CD4-positive, alpha-beta T cell (primary cell): ENCODE measurements at regions of chr5 and their contacts with region 1.

Region 1: DNA sequence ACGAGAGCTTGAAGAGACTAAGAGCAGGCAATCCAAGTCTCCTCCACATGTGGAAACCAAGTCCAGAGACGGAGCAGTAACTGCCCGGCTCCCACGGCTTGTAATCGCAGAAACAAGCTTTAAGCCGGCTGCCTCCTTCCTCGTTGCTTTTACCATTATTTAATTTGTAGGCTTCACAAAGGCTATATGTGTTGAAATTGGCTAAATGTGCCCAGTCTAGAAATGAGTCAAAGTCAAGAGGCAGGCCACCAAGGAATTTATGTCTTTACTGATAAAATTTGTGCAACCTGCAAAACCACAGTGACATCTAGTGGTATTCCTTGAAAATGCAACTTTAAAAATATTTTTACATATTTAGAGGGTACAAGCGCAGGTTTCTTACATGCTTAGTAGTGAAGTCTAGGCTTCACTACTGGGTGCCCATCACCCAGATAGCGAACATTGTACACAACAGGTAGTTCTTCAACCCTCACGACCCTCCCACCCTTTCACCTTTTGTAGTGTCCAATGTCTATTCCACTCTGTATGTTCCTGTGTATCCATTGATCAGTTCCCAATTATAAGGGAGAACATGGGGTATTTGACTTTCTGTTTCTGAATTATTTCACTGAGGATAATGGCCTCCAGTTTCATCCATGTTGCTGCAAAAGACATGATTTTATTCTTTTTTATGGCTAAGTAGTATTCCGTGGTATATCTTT is 33.5 kb upstream of the EBF1 start:
- DNase-seq: peak in 3 of 14 experiments; percentile 45 to 65 (median 64)
- ATAC-seq: peak; percentile 37
- H3K4me3 ChIP-seq: no peak overlapping the region
- H3K4me3 Mint-ChIP-seq: no peak overlapping the region
- H3K27ac ChIP-seq: no peak overlapping the region
- H3K27ac Mint-ChIP-seq: no peak overlapping the region
- H3K4me1 ChIP-seq: no peaks in the 10 kb centered on the region
- H3K4me1 Mint-ChIP-seq: no peaks in the 10 kb centered on the region
- H3K27me3 ChIP-seq: no peaks in the 10 kb centered on the region
- H3K27me3 Mint-ChIP-seq: peaks cover 10% of the 10 kb centered on the region
- CTCF ChIP-seq: peak; percentile 97

Region 2: DNA sequence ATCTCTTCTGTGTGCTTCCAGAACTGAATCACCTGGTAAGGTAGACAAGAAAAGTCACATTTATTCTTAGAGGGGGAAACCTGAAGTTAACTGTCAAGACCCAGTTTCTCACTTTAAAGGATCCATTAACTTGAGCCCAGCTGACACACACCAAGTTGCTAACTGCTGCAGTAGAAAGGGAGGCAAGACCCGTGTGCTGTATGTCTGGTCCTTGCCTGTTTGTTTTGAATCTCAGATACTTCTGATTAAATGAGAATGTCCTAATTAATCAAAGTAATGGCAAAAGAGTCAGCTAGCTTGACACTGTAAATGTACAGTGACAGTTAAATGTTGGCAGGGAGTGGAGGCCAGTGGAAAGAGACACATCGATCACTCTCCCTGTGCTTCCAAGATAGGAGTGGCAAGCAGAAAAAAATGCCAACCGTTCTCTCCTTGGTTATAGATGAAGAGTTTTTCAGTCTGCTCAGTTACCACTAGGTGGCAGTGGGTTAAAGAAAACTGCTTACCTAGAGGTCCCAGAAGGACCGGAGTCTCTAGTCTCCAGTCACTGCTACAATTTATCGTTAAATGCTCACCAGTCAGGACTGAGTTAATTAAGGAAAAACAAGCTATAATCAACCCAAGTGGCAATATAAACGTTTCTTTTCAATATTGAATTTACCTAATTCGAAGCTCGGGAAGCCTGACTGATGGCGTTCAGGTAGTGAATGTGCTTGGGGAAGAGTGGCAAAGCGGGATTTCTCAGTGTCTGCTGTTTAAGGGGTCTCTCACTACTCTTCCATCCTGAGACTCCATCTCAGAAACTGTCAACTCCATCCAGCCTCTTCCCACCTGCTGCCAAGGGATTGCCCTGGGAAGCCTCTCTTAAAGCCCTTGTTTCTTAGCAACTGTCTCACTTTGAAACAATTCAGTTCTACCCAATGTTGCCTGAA is 1371.2 kb before region 1 on chr5:
- CTCF ChIA-PET with region 1: no interaction called
- POLR2A ChIA-PET with region 1: no interaction called
- intact Hi-C with region 1: loop called (anchors 1 to 5 kb)
- DNase-seq: peak in 4 of 14 experiments; percentile 30 to 66 (median 59)
- ATAC-seq: peak; percentile 82
- H3K4me3 ChIP-seq: no peak overlapping the region
- H3K4me3 Mint-ChIP-seq: no peak overlapping the region
- H3K27ac ChIP-seq: no peak overlapping the region
- H3K27ac Mint-ChIP-seq: no peak overlapping the region
- H3K4me1 ChIP-seq: no peaks in the 10 kb centered on the region
- H3K4me1 Mint-ChIP-seq: peaks cover 6% of the 10 kb centered on the region
- H3K27me3 ChIP-seq: no peaks in the 10 kb centered on the region
- H3K27me3 Mint-ChIP-seq: no peaks in the 10 kb centered on the region
- CTCF ChIP-seq: peak; percentile 88

Region 3: DNA sequence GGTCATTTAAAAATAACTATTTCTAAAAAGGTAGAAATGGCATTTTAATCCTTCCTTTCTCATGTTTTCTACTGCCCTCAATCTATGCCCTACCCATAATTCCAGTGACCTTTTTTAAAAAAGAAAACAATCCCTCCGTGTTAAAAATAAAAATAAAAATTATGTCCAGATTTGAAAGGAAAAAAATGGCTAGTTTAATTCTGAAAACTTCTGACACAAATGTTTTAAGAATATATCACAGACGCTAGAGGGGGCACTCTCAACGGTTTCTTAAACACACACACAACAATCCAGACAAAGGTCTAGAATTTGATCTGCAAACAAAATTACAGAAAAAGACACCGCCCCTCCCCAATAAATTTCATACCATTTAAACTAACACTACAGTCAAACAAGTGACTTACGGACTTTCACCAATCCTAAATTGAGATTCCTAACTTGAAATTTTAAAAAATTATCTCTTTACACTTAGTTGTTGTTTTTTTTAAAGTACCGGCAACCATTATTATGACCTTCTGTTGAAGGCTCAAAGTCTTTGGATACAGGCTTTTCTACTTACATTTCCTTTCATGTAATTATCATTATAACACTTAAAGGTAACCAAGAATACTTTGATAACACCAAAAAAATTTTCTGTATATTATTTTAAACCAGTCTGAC is 1312.5 kb before region 1 on chr5:
- CTCF ChIA-PET with region 1: no interaction called
- POLR2A ChIA-PET with region 1: no interaction called
- intact Hi-C with region 1: loop called (anchors 1 to 5 kb)
- DNase-seq: peak in 4 of 14 experiments; percentile 36 to 62 (median 53)
- ATAC-seq: no peak
- H3K4me3 ChIP-seq: no peak overlapping the region
- H3K4me3 Mint-ChIP-seq: no peak overlapping the region
- H3K27ac ChIP-seq: no peak overlapping the region
- H3K27ac Mint-ChIP-seq: peak overlapping the region; percentile 11
- H3K4me1 ChIP-seq: no peaks in the 10 kb centered on the region
- H3K4me1 Mint-ChIP-seq: peaks cover 58% of the 10 kb centered on the region
- H3K27me3 ChIP-seq: no peaks in the 10 kb centered on the region
- H3K27me3 Mint-ChIP-seq: no peaks in the 10 kb centered on the region
- CTCF ChIP-seq: peak; percentile 61

Region 4: DNA sequence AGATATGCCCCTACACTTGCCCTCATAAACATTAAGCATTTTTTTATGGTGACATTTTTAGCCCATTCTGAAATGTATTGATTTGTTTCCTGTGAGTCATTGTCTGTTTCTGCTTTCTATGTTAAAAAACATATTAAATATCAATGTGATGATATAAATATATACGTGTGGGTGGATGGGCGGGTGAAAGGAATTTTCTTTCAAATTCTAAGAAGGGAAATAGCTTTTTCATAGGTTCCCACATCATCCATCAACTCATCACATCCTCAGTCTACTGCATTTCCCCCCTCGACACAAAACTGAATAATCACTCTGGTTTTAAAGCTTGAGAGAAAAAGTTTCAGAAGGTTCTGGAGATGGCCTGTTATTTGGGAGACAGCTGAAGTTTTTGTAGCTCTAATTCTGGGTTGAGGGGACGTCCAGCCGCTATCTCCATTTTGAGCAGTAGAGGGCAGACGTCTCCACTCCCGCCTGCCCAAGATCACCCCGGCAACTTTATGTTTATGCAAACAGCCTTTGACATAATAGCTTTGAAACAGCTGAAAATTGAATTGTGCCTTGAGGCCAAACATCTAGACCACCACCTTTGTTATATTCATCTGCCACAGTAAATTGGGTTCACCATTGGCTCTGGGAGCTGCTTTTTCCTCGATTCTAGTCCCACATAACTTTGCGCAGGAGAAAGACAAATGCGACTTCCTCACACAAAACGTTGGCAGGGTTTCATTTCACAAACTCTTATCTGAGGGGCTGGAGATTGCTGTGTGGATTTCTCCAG is 1058.0 kb before region 1 on chr5:
- CTCF ChIA-PET with region 1: no interaction called
- POLR2A ChIA-PET with region 1: no interaction called
- intact Hi-C with region 1: loop called in 1 of 2 experiments (anchors 2 kb)
- DNase-seq: peak; percentile 9 to 69 (median 26)
- ATAC-seq: peak; percentile 68
- H3K4me3 ChIP-seq: no peak overlapping the region
- H3K4me3 Mint-ChIP-seq: no peak overlapping the region
- H3K27ac ChIP-seq: no peak overlapping the region
- H3K27ac Mint-ChIP-seq: no peak overlapping the region
- H3K4me1 ChIP-seq: peaks cover 5% of the 10 kb centered on the region
- H3K4me1 Mint-ChIP-seq: peaks cover 4% of the 10 kb centered on the region
- H3K27me3 ChIP-seq: peaks cover 0 to 5% of the 10 kb centered on the region in 2 experiments
- H3K27me3 Mint-ChIP-seq: peaks cover 5% of the 10 kb centered on the region
- CTCF ChIP-seq: peak; percentile 80

Region 5: GRCh38 chr5:158174918-158175851 is 958.0 kb before region 1 on chr5:
- CTCF ChIA-PET with region 1: interaction called, 3 read pairs
- POLR2A ChIA-PET with region 1: interaction called, 3 read pairs
- intact Hi-C with region 1: loop called (anchors 1 kb)
- DNase-seq: peak; percentile 3 to 70 (median 29)
- ATAC-seq: peak; percentile 52
- H3K4me3 ChIP-seq: no peak overlapping the region
- H3K4me3 Mint-ChIP-seq: no peak overlapping the region
- H3K27ac ChIP-seq: no peak overlapping the region
- H3K27ac Mint-ChIP-seq: no peak overlapping the region
- H3K4me1 ChIP-seq: no peaks in the 10 kb centered on the region
- H3K4me1 Mint-ChIP-seq: no peaks in the 10 kb centered on the region
- H3K27me3 ChIP-seq: peaks cover 0 to 3% of the 10 kb centered on the region in 2 experiments
- H3K27me3 Mint-ChIP-seq: no peaks in the 10 kb centered on the region
- CTCF ChIP-seq: peak; percentile 55

Region 6: GRCh38 chr5:158695595-158696330 is 437.4 kb before region 1 on chr5:
- CTCF ChIA-PET with region 1: interaction called, 21 read pairs
- POLR2A ChIA-PET with region 1: interaction called, 3 read pairs
- intact Hi-C with region 1: loop called (anchors 1 kb)
- DNase-seq: peak; percentile 27 to 80 (median 60)
- ATAC-seq: peak; percentile 80
- H3K4me3 ChIP-seq: no peak overlapping the region
- H3K4me3 Mint-ChIP-seq: no peak overlapping the region
- H3K27ac ChIP-seq: no peak overlapping the region
- H3K27ac Mint-ChIP-seq: no peak overlapping the region
- H3K4me1 ChIP-seq: no peaks in the 10 kb centered on the region
- H3K4me1 Mint-ChIP-seq: peaks cover 3% of the 10 kb centered on the region
- H3K27me3 ChIP-seq: no peaks in the 10 kb centered on the region
- H3K27me3 Mint-ChIP-seq: no peaks in the 10 kb centered on the region
- CTCF ChIP-seq: peak; percentile 99

Region 7: GRCh38 chr5:158770506-158770905 is 362.7 kb before region 1 on chr5:
- CTCF ChIA-PET with region 1: no interaction called
- POLR2A ChIA-PET with region 1: no interaction called
- intact Hi-C with region 1: no loop called
- DNase-seq: no peak
- ATAC-seq: no peak
- H3K4me3 ChIP-seq: no peak overlapping the region
- H3K4me3 Mint-ChIP-seq: no peak overlapping the region
- H3K27ac ChIP-seq: no peak overlapping the region
- H3K27ac Mint-ChIP-seq: no peak overlapping the region
- H3K4me1 ChIP-seq: no peaks in the 10 kb centered on the region
- H3K4me1 Mint-ChIP-seq: peaks cover 3% of the 10 kb centered on the region
- H3K27me3 ChIP-seq: no peaks in the 10 kb centered on the region
- H3K27me3 Mint-ChIP-seq: peaks cover 9% of the 10 kb centered on the region
- CTCF ChIP-seq: no peak

Region 8: GRCh38 chr5:159100025-159100781 is 33.0 kb before region 1 on chr5:
- CTCF ChIA-PET with region 1: no interaction called
- POLR2A ChIA-PET with region 1: no interaction called
- intact Hi-C with region 1: no loop called
- DNase-seq: peak; percentile 58 to 92 (median 74)
- ATAC-seq: peak; percentile 86
- H3K4me3 ChIP-seq: peak overlapping the region; percentile 51
- H3K4me3 Mint-ChIP-seq: peak overlapping the region; percentile 93
- H3K27ac ChIP-seq: no peak overlapping the region
- H3K27ac Mint-ChIP-seq: peak overlapping the region; percentile 79
- H3K4me1 ChIP-seq: peaks cover 39% of the 10 kb centered on the region
- H3K4me1 Mint-ChIP-seq: peaks cover 42% of the 10 kb centered on the region
- H3K27me3 ChIP-seq: peaks cover 46 to 53% of the 10 kb centered on the region in 2 experiments
- H3K27me3 Mint-ChIP-seq: peaks cover 82% of the 10 kb centered on the region
- CTCF ChIP-seq: no peak